Heart right ventricle (tissue), 16 donors: ENCODE measurements at regions of chr10 and their contacts with region 1.

Region 1: GRCh38 chr10:95755511-95756004 is 405 bp upstream of the ENTPD1 start:
- DNase-seq: peak in 1 of 2 donors; percentile 57
- ATAC-seq: peak in 7 of 8 donors; percentile 67 to 82 (median 78)
- H3K4me3 ChIP-seq: peak overlapping the region in 9 of 10 donors; percentile 18 to 59 (median 47)
- H3K27ac ChIP-seq: peak overlapping the region; percentile 16 to 93 (median 74)
- H3K4me1 ChIP-seq: peaks cover 0 to 52% (median 16%) of the 10 kb centered on the region in 9 donors
- H3K27me3 ChIP-seq: peaks cover 0 to 4% (median 0%) of the 10 kb centered on the region in 7 donors
- CTCF ChIP-seq: no peak

Region 2: GRCh38 chr10:95660283-95660682 is 95.3 kb before region 1 on chr10:
- intact Hi-C with region 1: no loop called
- DNase-seq: no peak
- ATAC-seq: no peak
- H3K4me3 ChIP-seq: no peak overlapping the region
- H3K27ac ChIP-seq: no peak overlapping the region
- H3K4me1 ChIP-seq: peaks cover 0 to 31% (median 15%) of the 10 kb centered on the region in 9 donors
- H3K27me3 ChIP-seq: no peaks in the 10 kb centered on the region
- CTCF ChIP-seq: no peak

Region 3: DNA sequence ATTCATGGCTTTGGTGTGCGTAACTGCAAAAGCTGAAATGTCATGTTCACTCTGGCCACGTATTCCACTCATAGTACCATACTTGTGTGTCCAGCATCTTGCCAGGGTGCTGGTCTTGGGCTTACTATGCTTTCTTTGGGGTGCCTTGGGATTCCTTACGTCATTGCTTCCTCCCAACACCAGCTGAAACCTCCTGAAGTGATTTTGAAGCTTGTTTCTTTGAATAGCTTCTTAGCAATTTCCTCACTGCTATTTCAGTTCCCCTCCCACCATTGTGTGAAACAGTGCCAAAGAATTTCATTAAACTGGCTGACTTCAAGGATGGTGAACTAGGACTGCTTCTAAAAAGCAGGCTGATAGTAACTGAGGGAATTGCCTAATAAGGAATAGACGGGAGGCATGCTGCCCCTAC is 37.3 kb after region 1 on chr10:
- intact Hi-C with region 1: loop called in 1 of 10 experiments (anchors 5 kb)
- DNase-seq: peak in 1 of 2 donors; percentile 57
- ATAC-seq: peak; percentile 50 to 94 (median 86)
- H3K4me3 ChIP-seq: no peak overlapping the region
- H3K27ac ChIP-seq: peak overlapping the region in 8 of 10 donors; percentile 61 to 88 (median 75)
- H3K4me1 ChIP-seq: peaks cover 0 to 73% (median 24%) of the 10 kb centered on the region in 9 donors
- H3K27me3 ChIP-seq: no peaks in the 10 kb centered on the region
- CTCF ChIP-seq: no peak

Region 4: GRCh38 chr10:95814011-95814727 is 58.6 kb after region 1 on chr10:
- intact Hi-C with region 1: no loop called
- DNase-seq: peak in 1 of 2 donors; percentile 58
- ATAC-seq: peak in 7 of 8 donors; percentile 76 to 92 (median 85)
- H3K4me3 ChIP-seq: no peak overlapping the region
- H3K27ac ChIP-seq: peak overlapping the region in 6 of 10 donors; percentile 32 to 68 (median 52)
- H3K4me1 ChIP-seq: peaks cover 0 to 44% (median 27%) of the 10 kb centered on the region in 9 donors
- H3K27me3 ChIP-seq: no peaks in the 10 kb centered on the region
- CTCF ChIP-seq: no peak